Mammary epithelial cell (primary cell): ENCODE measurements at regions of chrX and their contacts with region 1.

Region 1: DNA sequence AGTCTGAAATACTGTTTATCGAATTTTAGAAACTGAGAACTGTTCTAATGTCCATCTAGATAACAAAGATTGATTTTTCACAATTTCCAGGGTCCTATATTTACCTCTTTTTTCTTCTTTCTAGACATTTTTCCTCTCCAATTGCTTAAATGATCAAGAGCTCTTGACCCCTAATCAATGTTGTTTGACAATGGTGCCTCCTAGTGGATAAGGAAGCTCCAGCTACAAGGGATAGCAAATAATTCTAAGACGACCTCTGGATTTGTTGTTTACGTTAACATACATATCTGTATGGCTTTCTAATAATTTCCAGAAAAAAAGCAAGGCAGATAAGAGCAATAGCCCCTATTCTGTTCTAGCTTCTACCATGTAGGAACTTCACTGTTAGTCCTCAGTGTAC is 35.8 kb downstream of the GPR82 start:
- DNase-seq: peak; percentile 3
- H3K4me3 ChIP-seq: no peak overlapping the region
- H3K27ac ChIP-seq: no peak overlapping the region
- H3K4me1 ChIP-seq: no peaks in the 10 kb centered on the region
- H3K27me3 ChIP-seq: no peaks in the 10 kb centered on the region
- CTCF ChIP-seq: peak; percentile 50

Region 2: DNA sequence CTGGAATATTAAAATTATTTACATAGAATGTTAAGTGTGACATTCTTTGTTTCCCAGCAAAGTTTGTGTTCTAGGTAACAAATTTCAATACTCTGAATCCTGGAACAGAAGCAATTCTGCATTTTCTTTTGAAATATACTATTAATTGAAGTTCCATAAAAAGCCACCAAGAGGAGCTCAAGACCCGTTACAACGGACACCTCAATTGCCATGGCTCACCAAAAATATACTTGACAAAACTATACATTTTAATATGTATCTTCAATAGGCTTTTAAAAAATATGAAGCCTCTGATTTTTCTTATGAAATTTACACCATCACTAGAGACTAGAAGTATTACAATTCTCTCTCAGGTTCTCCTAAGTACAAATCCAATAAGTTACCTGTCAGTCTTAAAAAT is 201.3 kb before region 1 on chrX:
- CTCF ChIA-PET with region 1: no interaction called
- dilution Hi-C with region 1: no loop called
- in situ Hi-C with region 1: no loop called
- intact Hi-C with region 1: loop called (anchors 10 kb)
- DNase-seq: no peak
- H3K4me3 ChIP-seq: no peak overlapping the region
- H3K27ac ChIP-seq: no peak overlapping the region
- H3K4me1 ChIP-seq: no peaks in the 10 kb centered on the region
- H3K27me3 ChIP-seq: no peaks in the 10 kb centered on the region
- CTCF ChIP-seq: peak; percentile 15 to 38